Body of pancreas (tissue), 4 donors: ENCODE measurements at regions of chr4 and their contacts with region 1.

Region 1: DNA sequence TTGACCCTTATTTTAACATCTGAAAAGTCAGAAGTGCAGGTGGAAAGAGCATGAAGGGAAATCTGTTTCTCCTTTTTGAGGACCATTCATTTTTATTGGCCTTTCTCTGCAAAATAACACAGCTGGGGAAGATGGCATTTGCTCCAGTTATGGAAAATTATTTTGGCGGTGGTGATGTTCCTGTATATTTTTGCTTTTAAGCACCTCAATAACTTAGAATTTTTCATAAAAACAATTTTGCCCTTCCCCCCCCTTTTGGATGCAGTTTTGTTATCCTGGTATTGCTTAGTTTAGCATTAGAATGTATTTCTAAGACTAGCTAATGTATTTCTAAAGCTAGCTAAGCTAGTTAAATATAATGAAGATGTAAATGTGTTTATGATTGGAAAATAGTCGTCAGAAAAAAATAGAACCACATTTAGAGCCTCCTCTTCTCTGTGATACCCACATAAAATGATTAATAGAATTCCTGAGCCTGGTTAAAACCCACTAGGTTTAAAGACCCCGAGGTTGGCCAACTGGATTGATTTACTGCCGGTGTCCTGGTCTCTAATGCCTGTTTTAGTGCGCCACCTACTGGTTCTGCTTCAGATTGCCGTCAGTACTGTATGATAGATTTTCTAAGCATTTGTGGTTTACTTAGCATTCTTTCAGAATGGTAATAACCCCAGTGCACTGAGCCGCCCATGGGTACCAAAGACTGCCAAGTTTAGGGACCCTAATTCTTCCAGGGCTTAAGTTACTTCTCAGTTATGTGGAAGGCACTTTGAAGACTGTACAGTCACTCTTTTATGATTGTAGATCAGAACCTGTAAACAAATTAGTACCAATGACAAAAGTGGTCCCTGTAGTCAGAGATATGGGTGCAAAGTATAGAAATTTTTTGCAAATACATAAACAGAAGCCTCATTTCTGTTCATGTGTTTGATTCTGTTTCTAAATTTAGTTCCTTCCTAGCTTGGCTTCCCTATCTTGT is 11.4 kb downstream of the KLF3 start:
- DNase-seq: peak; percentile 82 to 89 (median 86)
- ATAC-seq: peak; percentile 51
- H3K4me3 ChIP-seq: no peak overlapping the region
- H3K27ac ChIP-seq: peak overlapping the region in 3 of 4 donors; percentile 99 to 100 (median 100)
- H3K4me1 ChIP-seq: peaks cover 71% of the 10 kb centered on the region
- H3K27me3 ChIP-seq: no peaks in the 10 kb centered on the region
- CTCF ChIP-seq: peak; percentile 82 to 89 (median 86)
- POLR2A ChIP-seq: no peak

Region 2: DNA sequence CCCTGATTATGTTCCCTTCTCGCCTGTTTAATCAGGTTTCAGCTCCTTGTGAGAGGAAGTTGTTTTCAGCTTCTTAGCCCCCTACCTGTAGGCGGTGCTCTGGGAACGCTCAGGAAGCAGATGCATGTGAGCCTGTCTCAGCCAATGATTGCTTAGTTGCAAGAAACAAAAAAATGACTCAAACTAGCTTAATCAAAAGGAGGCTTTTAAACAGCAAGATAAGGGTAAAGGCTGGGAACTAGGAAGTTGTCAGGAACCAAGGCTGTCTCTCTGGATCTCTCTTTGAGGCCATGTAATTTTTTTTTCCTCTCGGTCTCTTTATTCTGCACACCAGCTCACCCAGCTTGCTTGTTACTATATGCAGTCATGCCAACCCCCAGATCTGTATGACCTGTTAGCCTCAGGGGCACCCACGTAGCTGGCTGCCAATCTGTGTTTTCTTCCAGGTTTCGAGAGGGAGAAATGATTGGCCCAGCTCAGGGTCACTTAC is 606.1 kb before region 1 on chr4:
- intact Hi-C with region 1: loop called (anchors 5 kb)
- DNase-seq: peak; percentile 81 to 90 (median 84)
- ATAC-seq: peak; percentile 94
- H3K4me3 ChIP-seq: no peak overlapping the region
- H3K27ac ChIP-seq: peak overlapping the region; percentile 64 to 87 (median 76)
- H3K4me1 ChIP-seq: peaks cover 44% of the 10 kb centered on the region
- H3K27me3 ChIP-seq: no peaks in the 10 kb centered on the region
- CTCF ChIP-seq: peak; percentile 41 to 95 (median 91)
- POLR2A ChIP-seq: peak in 1 of 3 donors; percentile 32

Region 3: DNA sequence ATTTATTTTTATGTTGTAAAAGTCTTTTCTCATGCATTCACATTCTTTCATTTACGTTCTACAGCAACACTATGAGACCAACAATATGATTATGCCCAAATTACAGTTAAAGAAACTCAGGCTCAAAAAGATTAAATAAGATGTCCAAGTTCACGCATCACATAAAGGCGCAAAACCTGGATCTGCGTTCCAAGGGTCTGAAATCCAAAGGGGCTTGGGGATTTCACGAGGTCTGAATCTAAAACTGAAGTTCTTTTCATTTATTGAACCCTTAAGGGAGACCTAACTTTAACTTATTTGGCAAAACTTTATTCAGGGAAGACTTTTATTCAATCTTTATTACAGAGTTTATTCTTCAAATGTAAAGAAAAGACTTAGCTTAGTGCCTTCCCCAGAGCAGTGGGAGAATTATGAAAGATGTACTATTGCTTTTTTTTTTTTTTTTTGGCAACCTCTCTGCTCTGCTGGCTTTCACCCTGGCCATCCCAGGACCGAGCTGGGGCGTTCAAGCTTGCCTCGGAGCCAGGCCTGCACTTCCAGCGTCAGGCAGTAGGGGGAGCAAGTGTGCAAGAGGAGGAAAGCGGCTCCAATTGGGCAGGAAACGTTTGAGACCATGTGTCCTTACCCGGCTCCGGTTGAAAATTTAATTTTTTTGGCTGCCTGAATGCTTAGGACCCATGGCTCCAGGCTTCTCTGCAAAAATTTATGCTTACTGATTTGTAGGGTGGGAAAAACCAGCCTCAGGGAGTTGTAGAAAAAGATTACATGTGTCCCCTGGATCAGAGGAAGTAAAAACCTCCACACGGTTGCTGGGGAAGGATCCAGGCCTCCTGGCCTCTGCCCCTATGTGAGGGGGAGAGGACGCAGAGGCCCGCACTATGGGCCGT is 355.7 kb before region 1 on chr4:
- intact Hi-C with region 1: loop called (anchors 5 kb)
- DNase-seq: peak; percentile 93 to 97 (median 94)
- ATAC-seq: peak; percentile 89
- H3K4me3 ChIP-seq: no peak overlapping the region
- H3K27ac ChIP-seq: peak overlapping the region; percentile 56 to 87 (median 82)
- H3K4me1 ChIP-seq: peaks cover 26% of the 10 kb centered on the region
- H3K27me3 ChIP-seq: no peaks in the 10 kb centered on the region
- CTCF ChIP-seq: peak; percentile 94 to 100 (median 99)
- POLR2A ChIP-seq: peak in 1 of 3 donors; percentile 5